ENCODE measurements at regions of chr3 and their contacts with region 1.

Region 1: GRCh38 chr3:113575206-113575605 is 42.9 kb downstream of the SIDT1 start:
- DNase-seq: no peak
- H3K4me3 Mint-ChIP-seq: no peak overlapping the region
- H3K27ac Mint-ChIP-seq: no peak overlapping the region
- H3K4me1 Mint-ChIP-seq: peaks cover 8% of the 10 kb centered on the region
- H3K27me3 Mint-ChIP-seq: no peaks in the 10 kb centered on the region

Region 2: DNA sequence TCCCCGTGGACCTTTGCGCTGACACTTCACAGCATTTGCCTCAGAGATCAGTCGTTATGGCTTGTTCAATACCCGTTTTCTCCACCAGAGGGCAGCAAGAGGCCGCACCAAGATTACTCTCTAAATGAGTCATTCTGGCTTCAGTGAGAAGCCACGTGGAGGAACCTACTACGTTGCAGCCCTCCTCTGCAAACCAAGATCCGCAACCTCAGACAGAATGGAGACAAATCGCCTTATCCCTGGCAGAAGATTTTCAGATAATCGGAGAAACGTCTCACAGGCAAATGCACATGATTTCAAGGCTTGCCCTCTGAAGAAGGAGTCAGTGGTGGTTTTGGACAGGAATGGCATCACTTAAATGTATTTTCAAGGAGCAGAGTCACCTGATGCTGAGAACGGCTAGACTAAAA is 523.9 kb before region 1 on chr3:
- CTCF ChIA-PET with region 1: no interaction called
- intact Hi-C with region 1: loop called (anchors 1 kb)
- DNase-seq: peak; percentile 96
- H3K4me3 Mint-ChIP-seq: no peak overlapping the region
- H3K27ac Mint-ChIP-seq: no peak overlapping the region
- H3K4me1 Mint-ChIP-seq: peaks cover 12% of the 10 kb centered on the region
- H3K27me3 Mint-ChIP-seq: no peaks in the 10 kb centered on the region

Region 3: GRCh38 chr3:113485161-113485609 is 90.0 kb before region 1 on chr3:
- CTCF ChIA-PET with region 1: interaction called, 10 read pairs
- intact Hi-C with region 1: no loop called
- DNase-seq: peak; percentile 14
- H3K4me3 Mint-ChIP-seq: no peak overlapping the region
- H3K27ac Mint-ChIP-seq: no peak overlapping the region
- H3K4me1 Mint-ChIP-seq: no peaks in the 10 kb centered on the region
- H3K27me3 Mint-ChIP-seq: no peaks in the 10 kb centered on the region

Region 4: GRCh38 chr3:113514265-113514769 is 60.9 kb before region 1 on chr3:
- CTCF ChIA-PET with region 1: interaction called, 44 read pairs
- intact Hi-C with region 1: loop called (anchors 1 kb)
- DNase-seq: no peak
- H3K4me3 Mint-ChIP-seq: no peak overlapping the region
- H3K27ac Mint-ChIP-seq: no peak overlapping the region
- H3K4me1 Mint-ChIP-seq: peaks cover 12% of the 10 kb centered on the region
- H3K27me3 Mint-ChIP-seq: peaks cover 12% of the 10 kb centered on the region

Region 5: DNA sequence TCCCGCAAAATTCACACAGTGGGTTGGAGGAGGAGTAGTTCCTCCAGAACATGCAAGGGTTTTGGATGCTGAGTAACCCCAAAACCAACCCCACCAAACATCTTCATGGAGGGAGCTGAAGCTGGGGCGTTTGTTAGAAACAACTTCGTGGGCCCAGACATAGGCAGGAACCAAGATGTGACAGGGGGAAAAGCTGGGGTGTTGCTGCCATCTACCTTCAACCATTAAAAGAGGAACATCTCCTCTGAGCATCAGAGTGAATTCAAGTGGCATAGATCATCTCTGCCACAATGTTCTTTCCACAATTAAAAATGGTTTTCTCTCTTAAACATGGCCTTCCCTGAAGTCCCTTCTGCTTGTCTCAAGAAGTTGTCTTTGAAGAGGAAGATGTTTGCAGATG is 22.4 kb before region 1 on chr3:
- CTCF ChIA-PET with region 1: interaction called, 14 read pairs
- intact Hi-C with region 1: no loop called
- DNase-seq: peak; percentile 48
- H3K4me3 Mint-ChIP-seq: no peak overlapping the region
- H3K27ac Mint-ChIP-seq: no peak overlapping the region
- H3K4me1 Mint-ChIP-seq: peaks cover 18% of the 10 kb centered on the region
- H3K27me3 Mint-ChIP-seq: no peaks in the 10 kb centered on the region

Region 6: GRCh38 chr3:113589971-113590370 is 14.8 kb after region 1 on chr3:
- CTCF ChIA-PET with region 1: interaction called, 18 read pairs
- intact Hi-C with region 1: no loop called
- DNase-seq: no peak
- H3K4me3 Mint-ChIP-seq: no peak overlapping the region
- H3K27ac Mint-ChIP-seq: no peak overlapping the region
- H3K4me1 Mint-ChIP-seq: peaks cover 16% of the 10 kb centered on the region
- H3K27me3 Mint-ChIP-seq: no peaks in the 10 kb centered on the region

Region 7: GRCh38 chr3:113626503-113627371 is 51.5 kb after region 1 on chr3:
- CTCF ChIA-PET with region 1: interaction called, 10 read pairs
- intact Hi-C with region 1: no loop called
- DNase-seq: peak; percentile 44
- H3K4me3 Mint-ChIP-seq: no peak overlapping the region
- H3K27ac Mint-ChIP-seq: no peak overlapping the region
- H3K4me1 Mint-ChIP-seq: no peaks in the 10 kb centered on the region
- H3K27me3 Mint-ChIP-seq: no peaks in the 10 kb centered on the region

Region 8: GRCh38 chr3:113660896-113661295 is 85.7 kb after region 1 on chr3:
- CTCF ChIA-PET with region 1: no interaction called
- intact Hi-C with region 1: no loop called
- DNase-seq: no peak
- H3K4me3 Mint-ChIP-seq: no peak overlapping the region
- H3K27ac Mint-ChIP-seq: no peak overlapping the region
- H3K4me1 Mint-ChIP-seq: no peaks in the 10 kb centered on the region
- H3K27me3 Mint-ChIP-seq: no peaks in the 10 kb centered on the region

Measured in activated naive CD4-positive, alpha-beta T cell treated with anti-CD3 and anti-CD28 coated beads for 36 hours (primary cell).